ENCODE measurements at regions of chr10 and their contacts with region 1.

Region 1: DNA sequence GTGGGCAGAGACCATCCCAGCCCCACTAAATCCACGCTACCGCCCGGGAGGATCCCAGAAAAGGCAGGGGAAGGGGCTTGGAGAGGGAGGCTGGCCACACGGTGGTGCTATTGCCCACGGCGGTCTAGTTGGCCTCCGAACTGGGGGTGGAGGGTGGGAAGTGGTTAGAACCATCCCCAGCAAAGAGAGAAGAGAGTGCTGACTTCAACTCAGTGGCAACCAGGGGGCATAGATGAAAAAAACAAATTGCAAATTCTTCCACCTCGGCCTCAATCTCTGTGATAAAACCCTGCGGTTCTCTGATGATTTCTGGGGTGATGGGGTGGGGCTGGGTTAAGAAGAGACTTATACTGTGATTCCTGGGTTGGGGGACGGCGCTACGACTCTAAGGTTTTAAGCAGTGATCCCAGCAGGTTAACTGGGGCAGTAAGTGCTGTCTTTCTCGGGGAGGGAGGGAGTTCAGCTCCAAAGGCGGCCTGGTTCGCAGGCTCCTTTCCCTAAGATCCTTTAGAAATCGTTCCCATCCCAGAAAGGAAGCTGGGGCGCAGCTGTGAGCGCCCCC is 154.5 kb upstream of the LYZL2 start:
- DNase-seq: peak; percentile 60
- ATAC-seq: peak; percentile 83
- H3K4me3 ChIP-seq: peak overlapping the region; percentile 86; the same call in 1 of the 2 replicates
- H3K27ac ChIP-seq: peak overlapping the region; percentile 47
- H3K4me1 ChIP-seq: peaks cover 15% of the 10 kb centered on the region
- H3K27me3 ChIP-seq: no peaks in the 10 kb centered on the region
- CTCF ChIP-seq: peak; percentile 88 to 93 (median 89)
- EP300 ChIP-seq: no peak
- POLR2A ChIP-seq: no peak
- RAD21 ChIP-seq: peak; percentile 89

Region 2: GRCh38 chr10:30671026-30671616 is 112.9 kb before region 1 on chr10:
- CTCF ChIA-PET with region 1: interaction called, 13 read pairs
- POLR2A ChIA-PET with region 1: no interaction called
- RAD21 ChIA-PET with region 1: interaction called, 8 read pairs
- SMC1A ChIA-PET with region 1: no interaction called
- in situ Hi-C with region 1: no loop called
- intact Hi-C with region 1: no loop called
- DNase-seq: no peak
- ATAC-seq: peak; percentile 78
- H3K4me3 ChIP-seq: no peak overlapping the region
- H3K27ac ChIP-seq: no peak overlapping the region
- H3K4me1 ChIP-seq: peaks cover 10% of the 10 kb centered on the region
- H3K27me3 ChIP-seq: no peaks in the 10 kb centered on the region
- CTCF ChIP-seq: peak; percentile 69 to 79 (median 73)
- EP300 ChIP-seq: no peak
- POLR2A ChIP-seq: no peak
- RAD21 ChIP-seq: peak; percentile 73

Region 3: DNA sequence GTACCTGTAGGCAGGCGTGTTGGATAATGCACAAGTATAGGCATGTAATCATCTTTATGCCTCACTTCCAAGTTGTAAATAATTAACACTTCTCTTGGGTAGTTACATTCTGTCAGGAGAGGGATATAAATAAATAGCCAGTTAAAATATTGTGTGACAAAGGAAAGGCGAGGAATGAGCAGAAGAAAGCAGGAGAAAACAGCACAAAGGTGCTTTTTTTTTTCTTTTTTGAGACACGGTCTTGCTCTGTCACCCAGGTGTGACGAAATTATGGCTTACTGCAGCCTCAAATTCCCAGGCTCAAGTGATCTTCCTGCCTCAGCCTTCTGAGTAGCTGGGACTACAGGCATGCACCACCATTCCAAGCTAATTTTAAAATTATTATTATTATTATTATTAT is 55.2 kb before region 1 on chr10:
- CTCF ChIA-PET with region 1: interaction called, 23 read pairs
- POLR2A ChIA-PET with region 1: no interaction called
- RAD21 ChIA-PET with region 1: interaction called, 9 read pairs
- SMC1A ChIA-PET with region 1: interaction called, 15 read pairs
- in situ Hi-C with region 1: no loop called
- intact Hi-C with region 1: loop called (anchors 2 kb)
- DNase-seq: no peak
- ATAC-seq: no peak
- H3K4me3 ChIP-seq: no peak overlapping the region
- H3K27ac ChIP-seq: no peak overlapping the region
- H3K4me1 ChIP-seq: peaks cover 8% of the 10 kb centered on the region
- H3K27me3 ChIP-seq: no peaks in the 10 kb centered on the region
- CTCF ChIP-seq: no peak
- EP300 ChIP-seq: no peak
- POLR2A ChIP-seq: no peak
- RAD21 ChIP-seq: no peak

Region 4: GRCh38 chr10:30893208-30893607 is 109.2 kb after region 1 on chr10:
- CTCF ChIA-PET with region 1: no interaction called
- POLR2A ChIA-PET with region 1: no interaction called
- RAD21 ChIA-PET with region 1: no interaction called
- SMC1A ChIA-PET with region 1: no interaction called
- in situ Hi-C with region 1: no loop called
- intact Hi-C with region 1: no loop called
- DNase-seq: no peak
- ATAC-seq: no peak
- H3K4me3 ChIP-seq: no peak overlapping the region
- H3K27ac ChIP-seq: no peak overlapping the region
- H3K4me1 ChIP-seq: no peaks in the 10 kb centered on the region
- H3K27me3 ChIP-seq: no peaks in the 10 kb centered on the region
- CTCF ChIP-seq: no peak
- EP300 ChIP-seq: no peak
- POLR2A ChIP-seq: no peak
- RAD21 ChIP-seq: no peak

Region 5: DNA sequence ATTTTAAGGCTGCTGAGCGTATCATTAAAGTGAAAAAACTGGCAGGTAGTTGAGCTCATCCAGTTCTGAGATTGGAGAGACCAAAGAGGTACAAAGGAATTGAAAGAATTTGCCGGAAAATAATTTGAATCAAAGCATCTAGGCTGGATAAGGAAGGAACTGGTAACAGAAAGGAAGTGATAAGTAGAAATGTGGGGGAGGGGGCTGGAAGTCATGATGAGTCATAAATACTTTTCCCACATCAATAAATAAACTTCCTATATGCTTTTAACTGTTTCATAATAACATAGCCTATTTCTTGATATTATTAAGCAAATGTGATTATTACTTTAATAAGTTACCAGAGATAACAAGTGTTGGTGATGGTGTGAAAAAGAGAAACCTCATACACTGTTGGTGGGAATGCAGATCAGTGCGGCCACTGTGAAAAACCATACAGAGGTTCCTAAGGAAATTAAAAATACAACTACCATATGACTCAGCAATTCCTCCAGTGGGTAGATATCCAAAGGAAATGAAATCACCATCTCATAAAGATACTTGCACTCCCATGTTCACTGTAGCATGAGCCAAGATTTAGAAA is 220.7 kb after region 1 on chr10:
- CTCF ChIA-PET with region 1: interaction called, 8 read pairs
- POLR2A ChIA-PET with region 1: no interaction called
- RAD21 ChIA-PET with region 1: interaction called, 12 read pairs
- SMC1A ChIA-PET with region 1: interaction called, 4 read pairs
- in situ Hi-C with region 1: no loop called
- intact Hi-C with region 1: no loop called
- DNase-seq: no peak
- ATAC-seq: peak; percentile 43
- H3K4me3 ChIP-seq: no peak overlapping the region
- H3K27ac ChIP-seq: no peak overlapping the region
- H3K4me1 ChIP-seq: peaks cover 5% of the 10 kb centered on the region
- H3K27me3 ChIP-seq: no peaks in the 10 kb centered on the region
- CTCF ChIP-seq: no peak
- EP300 ChIP-seq: peak in 1 of 2 experiments; percentile 72; a peak in 1 of 4 replicates
- POLR2A ChIP-seq: no peak
- RAD21 ChIP-seq: no peak

Region 6: GRCh38 chr10:31090894-31091607 is 307.0 kb after region 1 on chr10:
- CTCF ChIA-PET with region 1: no interaction called
- POLR2A ChIA-PET with region 1: no interaction called
- RAD21 ChIA-PET with region 1: interaction called, 5 read pairs
- SMC1A ChIA-PET with region 1: interaction called, 4 read pairs
- in situ Hi-C with region 1: no loop called
- intact Hi-C with region 1: loop called (anchors 5 kb)
- DNase-seq: peak; percentile 84
- ATAC-seq: peak; percentile 96
- H3K4me3 ChIP-seq: no peak overlapping the region
- H3K27ac ChIP-seq: no peak overlapping the region
- H3K4me1 ChIP-seq: peaks cover 4% of the 10 kb centered on the region; the same call in 1 of the 2 replicates
- H3K27me3 ChIP-seq: no peaks in the 10 kb centered on the region
- CTCF ChIP-seq: no peak
- EP300 ChIP-seq: peak in 1 of 2 experiments; percentile 75; a peak in 1 of 4 replicates
- POLR2A ChIP-seq: no peak
- RAD21 ChIP-seq: peak; percentile 26; the same call in 1 of the 2 replicates

Region 7: GRCh38 chr10:31490858-31491504 is 707.0 kb after region 1 on chr10:
- CTCF ChIA-PET with region 1: interaction called, 20 read pairs
- POLR2A ChIA-PET with region 1: no interaction called
- RAD21 ChIA-PET with region 1: interaction called, 25 read pairs
- SMC1A ChIA-PET with region 1: interaction called, 5 read pairs
- in situ Hi-C with region 1: no loop called
- intact Hi-C with region 1: no loop called
- DNase-seq: peak; percentile 28
- ATAC-seq: peak; percentile 83
- H3K4me3 ChIP-seq: no peak overlapping the region
- H3K27ac ChIP-seq: no peak overlapping the region
- H3K4me1 ChIP-seq: no peaks in the 10 kb centered on the region
- H3K27me3 ChIP-seq: no peaks in the 10 kb centered on the region
- CTCF ChIP-seq: peak; percentile 53 to 60 (median 53)
- EP300 ChIP-seq: no peak
- POLR2A ChIP-seq: no peak
- RAD21 ChIP-seq: peak; percentile 65

Measured in GM12878 (cell line).